PC-9 (cell line): ENCODE measurements at regions of chr2 and their contacts with region 1.

Region 1: DNA sequence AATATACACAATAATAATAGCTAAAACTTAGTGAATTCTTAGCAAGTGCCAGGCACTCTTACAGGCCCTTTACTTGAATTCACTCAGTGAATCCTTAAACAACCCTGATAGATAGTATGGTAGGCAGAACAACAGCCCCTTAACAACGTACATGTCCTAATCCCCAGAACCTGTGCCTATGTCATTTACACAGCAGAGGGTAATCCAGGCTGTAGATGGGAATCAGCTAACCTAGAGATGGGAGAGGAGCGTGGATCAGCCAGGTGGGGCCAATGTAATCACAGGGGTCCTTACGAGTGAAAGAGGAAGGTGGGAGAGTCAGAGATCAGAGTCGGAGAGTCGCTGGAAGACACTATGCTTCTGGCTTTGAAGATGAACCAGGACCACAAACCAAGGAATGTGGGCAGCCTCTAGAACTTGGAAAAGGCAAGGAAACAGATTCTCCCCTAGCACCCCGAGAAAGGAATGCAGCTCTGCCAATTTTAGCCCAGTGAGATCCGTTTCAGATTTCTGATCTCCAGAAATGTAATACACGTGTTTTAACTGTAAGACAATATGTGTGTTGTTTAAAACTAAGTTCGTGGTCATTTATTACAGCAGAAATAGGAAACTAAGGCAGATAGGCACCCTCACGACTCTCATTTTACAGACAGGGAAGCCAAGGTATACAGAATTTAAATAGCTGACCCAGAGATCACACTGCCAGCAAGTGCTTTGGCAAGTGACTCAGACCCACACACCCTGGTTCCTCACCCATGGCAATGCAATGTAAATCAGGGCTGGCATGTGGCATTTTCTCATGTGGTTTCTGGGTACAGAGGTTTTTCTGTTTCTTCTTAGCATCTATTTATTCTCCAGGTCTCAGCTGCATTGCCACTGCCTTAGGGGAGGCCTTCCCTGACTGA is 68.9 kb downstream of the DOCK10 start:
- DNase-seq: peak in 1 of 2 experiments; percentile 73
- H3K4me3 ChIP-seq: no peak overlapping the region
- H3K27ac ChIP-seq: no peak overlapping the region
- H3K4me1 ChIP-seq: peaks cover 31% of the 10 kb centered on the region
- H3K27me3 ChIP-seq: no peaks in the 10 kb centered on the region
- CTCF ChIP-seq: no peak

Region 2: GRCh38 chr2:224377751-224378700 is 595.3 kb before region 1 on chr2:
- CTCF ChIA-PET with region 1: no interaction called
- POLR2A ChIA-PET with region 1: no interaction called
- intact Hi-C with region 1: no loop called
- DNase-seq: no peak
- H3K4me3 ChIP-seq: no peak overlapping the region
- H3K27ac ChIP-seq: no peak overlapping the region
- H3K4me1 ChIP-seq: no peaks in the 10 kb centered on the region
- H3K27me3 ChIP-seq: no peaks in the 10 kb centered on the region
- CTCF ChIP-seq: peak; percentile 59; the same call in 1 of the 2 replicates

Region 3: DNA sequence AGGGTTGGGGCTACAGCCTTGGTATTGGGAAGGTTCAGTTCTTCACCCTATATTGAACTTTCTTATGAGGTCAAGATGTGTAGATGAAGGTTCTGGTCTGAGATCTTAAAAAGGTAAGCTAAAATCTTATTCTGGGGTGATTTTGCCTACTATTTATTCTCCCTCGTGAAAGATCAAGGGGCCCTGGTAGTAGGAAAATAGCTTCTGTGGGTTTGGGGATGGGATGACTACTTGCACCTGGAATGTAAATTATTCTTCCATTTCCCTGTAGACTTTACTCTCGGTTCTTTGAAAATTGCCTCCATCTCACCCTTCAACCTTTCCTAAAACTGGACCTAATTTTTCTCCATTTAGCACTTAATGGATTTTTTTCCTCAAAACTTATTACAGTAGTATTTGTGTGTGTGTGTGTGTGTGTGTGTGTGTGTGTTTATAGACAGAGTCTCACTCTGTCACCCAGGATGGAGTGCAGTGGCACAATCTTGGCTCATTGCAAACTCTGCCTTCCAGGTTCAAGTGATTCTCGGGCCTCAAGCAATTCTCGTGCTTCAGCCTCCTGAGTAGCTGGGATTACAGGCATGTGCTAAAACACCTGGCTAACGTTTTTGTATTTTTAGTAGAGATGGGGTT is 294.6 kb before region 1 on chr2:
- CTCF ChIA-PET with region 1: no interaction called
- POLR2A ChIA-PET with region 1: no interaction called
- intact Hi-C with region 1: loop called (anchors 1 kb)
- DNase-seq: peak; percentile 52 to 90
- H3K4me3 ChIP-seq: peak overlapping the region; percentile 33; the same call in 1 of the 2 replicates
- H3K27ac ChIP-seq: peak overlapping the region; percentile 92
- H3K4me1 ChIP-seq: peaks cover 26% of the 10 kb centered on the region
- H3K27me3 ChIP-seq: no peaks in the 10 kb centered on the region
- CTCF ChIP-seq: no peak